B cell (primary cell): ENCODE measurements at regions of chr11 and their contacts with region 1.

Region 1: DNA sequence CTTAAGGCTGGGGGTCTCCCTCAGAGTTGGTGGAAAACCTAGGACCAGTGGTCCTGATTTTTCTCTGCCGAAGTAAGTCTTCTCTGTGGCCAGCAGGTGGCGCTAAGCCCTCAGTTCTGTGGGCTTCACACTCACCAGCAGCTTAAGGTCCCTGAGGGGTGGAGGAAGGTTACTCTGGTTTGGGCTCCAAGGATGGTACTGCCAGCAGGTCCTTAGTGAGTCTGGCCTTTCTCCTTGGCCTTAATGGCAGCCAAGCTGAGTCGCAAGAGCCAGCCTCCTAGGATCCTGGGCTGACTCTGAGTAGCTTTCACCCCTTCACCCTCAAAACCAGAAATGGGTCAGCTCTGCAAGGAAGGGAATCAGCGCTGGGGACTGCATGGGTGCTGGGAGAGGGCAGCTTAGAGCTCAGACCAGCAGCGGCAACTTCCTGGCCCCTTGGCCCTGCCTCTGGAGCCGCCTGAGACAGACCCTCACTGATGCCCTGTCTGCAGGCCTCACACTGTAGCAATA is 4.4 kb downstream of the KCNJ11 start:
- DNase-seq: peak; percentile 85
- ATAC-seq: peak; percentile 72
- H3K4me3 ChIP-seq: no peak overlapping the region
- H3K4me3 Mint-ChIP-seq: no peak overlapping the region
- H3K27ac ChIP-seq: no peak overlapping the region
- H3K27ac Mint-ChIP-seq: no peak overlapping the region
- H3K4me1 ChIP-seq: peaks cover 4 to 10% of the 10 kb centered on the region in 2 donors
- H3K4me1 Mint-ChIP-seq: peaks cover 2% of the 10 kb centered on the region
- H3K27me3 ChIP-seq: no peaks in the 10 kb centered on the region
- H3K27me3 Mint-ChIP-seq: peaks cover 5% of the 10 kb centered on the region
- CTCF ChIP-seq: peak; percentile 93

Region 2: DNA sequence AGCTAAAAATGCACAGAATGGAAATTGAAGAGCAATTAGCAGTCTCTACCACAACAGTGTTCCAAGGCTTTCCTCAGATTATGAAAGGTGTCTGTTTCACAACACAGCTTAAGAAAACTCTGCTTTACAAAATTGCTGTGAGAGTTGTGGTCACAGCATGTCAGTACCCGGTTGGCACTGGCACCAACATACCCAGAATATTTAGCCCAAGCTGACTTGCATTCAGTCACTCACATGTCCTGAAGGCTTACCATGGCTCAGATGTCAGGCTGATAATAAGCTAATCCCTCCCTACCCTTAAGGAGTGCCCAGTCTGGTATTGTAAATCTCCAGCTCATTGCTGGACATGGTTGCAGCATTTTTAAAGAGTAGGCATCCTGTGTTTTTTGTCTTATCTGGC is 17.6 kb before region 1 on chr11:
- CTCF ChIA-PET with region 1: interaction called, 22 read pairs
- POLR2A ChIA-PET with region 1: no interaction called
- intact Hi-C with region 1: no loop called
- DNase-seq: no peak
- ATAC-seq: no peak
- H3K4me3 ChIP-seq: no peak overlapping the region
- H3K4me3 Mint-ChIP-seq: no peak overlapping the region
- H3K27ac ChIP-seq: no peak overlapping the region
- H3K27ac Mint-ChIP-seq: no peak overlapping the region
- H3K4me1 ChIP-seq: no peaks in the 10 kb centered on the region
- H3K4me1 Mint-ChIP-seq: no peaks in the 10 kb centered on the region
- H3K27me3 ChIP-seq: peaks cover 0 to 3% (median 0%) of the 10 kb centered on the region in 4 experiments
- H3K27me3 Mint-ChIP-seq: no peaks in the 10 kb centered on the region
- CTCF ChIP-seq: no peak

Region 3: DNA sequence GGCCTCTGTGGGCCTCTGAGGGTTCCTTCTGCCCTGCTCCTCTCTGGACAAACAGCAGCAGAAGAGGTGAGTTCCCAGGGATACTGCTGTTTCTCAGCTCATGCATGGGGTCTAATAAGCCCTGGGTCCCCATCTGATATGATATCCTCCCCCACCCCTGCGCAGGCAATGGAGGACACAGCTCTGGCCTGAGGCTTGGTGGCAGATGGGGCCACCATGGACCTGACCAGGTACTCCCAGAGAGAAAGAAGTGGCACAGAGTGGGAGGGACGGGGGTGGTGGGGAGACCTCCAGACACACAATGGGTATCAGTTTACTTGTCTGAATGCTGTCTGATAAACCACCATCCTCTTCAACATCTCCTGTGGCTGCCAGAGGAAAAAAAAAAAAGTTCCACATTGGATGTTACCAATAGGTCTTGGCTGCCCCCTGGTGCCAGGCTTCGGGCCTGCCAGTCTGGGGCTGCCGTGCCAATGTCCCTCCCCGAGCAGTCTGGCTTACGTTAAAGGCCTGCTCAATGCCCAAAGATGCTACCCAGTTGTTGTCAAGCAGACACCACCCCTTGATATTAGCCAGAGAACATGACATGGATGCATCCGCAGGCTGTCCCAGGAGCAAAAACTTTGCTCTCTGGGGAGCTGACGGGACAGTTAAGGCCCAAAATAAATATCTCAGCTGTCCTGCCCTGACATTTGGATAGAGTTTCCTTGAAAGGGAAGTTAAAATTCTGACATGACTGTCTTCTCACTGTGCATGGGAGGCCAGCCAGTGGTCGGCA is 120.5 kb after region 1 on chr11:
- CTCF ChIA-PET with region 1: interaction called, 116 read pairs
- POLR2A ChIA-PET with region 1: no interaction called
- intact Hi-C with region 1: loop called (anchors 1 kb)
- DNase-seq: peak; percentile 79
- ATAC-seq: peak; percentile 68
- H3K4me3 ChIP-seq: no peak overlapping the region
- H3K4me3 Mint-ChIP-seq: no peak overlapping the region
- H3K27ac ChIP-seq: no peak overlapping the region
- H3K27ac Mint-ChIP-seq: no peak overlapping the region
- H3K4me1 ChIP-seq: no peaks in the 10 kb centered on the region
- H3K4me1 Mint-ChIP-seq: no peaks in the 10 kb centered on the region
- H3K27me3 ChIP-seq: no peaks in the 10 kb centered on the region
- H3K27me3 Mint-ChIP-seq: peaks cover 9% of the 10 kb centered on the region
- CTCF ChIP-seq: peak; percentile 82

Region 4: GRCh38 chr11:17519061-17519885 is 135.2 kb after region 1 on chr11:
- CTCF ChIA-PET with region 1: interaction called, 10 read pairs
- POLR2A ChIA-PET with region 1: no interaction called
- intact Hi-C with region 1: no loop called
- DNase-seq: no peak
- ATAC-seq: no peak
- H3K4me3 ChIP-seq: no peak overlapping the region
- H3K4me3 Mint-ChIP-seq: no peak overlapping the region
- H3K27ac ChIP-seq: no peak overlapping the region
- H3K27ac Mint-ChIP-seq: no peak overlapping the region
- H3K4me1 ChIP-seq: no peaks in the 10 kb centered on the region
- H3K4me1 Mint-ChIP-seq: no peaks in the 10 kb centered on the region
- H3K27me3 ChIP-seq: peaks cover 0 to 2% (median 0%) of the 10 kb centered on the region in 4 experiments
- H3K27me3 Mint-ChIP-seq: peaks cover 6% of the 10 kb centered on the region
- CTCF ChIP-seq: no peak

Region 5: GRCh38 chr11:17610085-17610894 is 226.2 kb after region 1 on chr11:
- CTCF ChIA-PET with region 1: no interaction called
- POLR2A ChIA-PET with region 1: no interaction called
- intact Hi-C with region 1: no loop called
- DNase-seq: no peak
- ATAC-seq: no peak
- H3K4me3 ChIP-seq: no peak overlapping the region
- H3K4me3 Mint-ChIP-seq: no peak overlapping the region
- H3K27ac ChIP-seq: no peak overlapping the region
- H3K27ac Mint-ChIP-seq: no peak overlapping the region
- H3K4me1 ChIP-seq: no peaks in the 10 kb centered on the region
- H3K4me1 Mint-ChIP-seq: no peaks in the 10 kb centered on the region
- H3K27me3 ChIP-seq: no peaks in the 10 kb centered on the region
- H3K27me3 Mint-ChIP-seq: peaks cover 11% of the 10 kb centered on the region
- CTCF ChIP-seq: no peak

Region 6: GRCh38 chr11:17978553-17979287 is 594.7 kb after region 1 on chr11:
- CTCF ChIA-PET with region 1: no interaction called
- POLR2A ChIA-PET with region 1: no interaction called
- intact Hi-C with region 1: loop called (anchors 5 kb)
- DNase-seq: peak; percentile 17
- ATAC-seq: no peak
- H3K4me3 ChIP-seq: no peak overlapping the region
- H3K4me3 Mint-ChIP-seq: no peak overlapping the region
- H3K27ac ChIP-seq: no peak overlapping the region
- H3K27ac Mint-ChIP-seq: no peak overlapping the region
- H3K4me1 ChIP-seq: peaks cover 0 to 4% of the 10 kb centered on the region in 2 donors
- H3K4me1 Mint-ChIP-seq: no peaks in the 10 kb centered on the region
- H3K27me3 ChIP-seq: no peaks in the 10 kb centered on the region
- H3K27me3 Mint-ChIP-seq: no peaks in the 10 kb centered on the region
- CTCF ChIP-seq: no peak